CD4-positive, alpha-beta memory T cell (primary cell): ENCODE measurements at regions of chr18 and their contacts with region 1.

Region 1: GRCh38 chr18:35240664-35241447 is at the start of gene ZNF397:
- DNase-seq: peak; percentile 91 to 94 (median 92)
- H3K4me3 ChIP-seq: peak within 1 kb of the TSS; percentile 81 to 90
- H3K4me3 Mint-ChIP-seq: peak within 1 kb of the TSS; percentile 96 to 98 (median 96)
- H3K27ac ChIP-seq: peak within 1 kb of the TSS; percentile 95
- H3K27ac Mint-ChIP-seq: peak within 1 kb of the TSS; percentile 94 to 100 (median 99)
- H3K4me1 ChIP-seq: peaks cover 17% of the 10 kb centered on the region
- H3K4me1 Mint-ChIP-seq: peaks cover 10 to 40% (median 15%) of the 10 kb centered on the region in 4 donors
- H3K27me3 ChIP-seq: no peaks in the 10 kb centered on the region
- H3K27me3 Mint-ChIP-seq: no peaks in the 10 kb centered on the region
- total RNA-seq, gene ZNF397: 56.1 to 58.5 TPM

Region 2: DNA sequence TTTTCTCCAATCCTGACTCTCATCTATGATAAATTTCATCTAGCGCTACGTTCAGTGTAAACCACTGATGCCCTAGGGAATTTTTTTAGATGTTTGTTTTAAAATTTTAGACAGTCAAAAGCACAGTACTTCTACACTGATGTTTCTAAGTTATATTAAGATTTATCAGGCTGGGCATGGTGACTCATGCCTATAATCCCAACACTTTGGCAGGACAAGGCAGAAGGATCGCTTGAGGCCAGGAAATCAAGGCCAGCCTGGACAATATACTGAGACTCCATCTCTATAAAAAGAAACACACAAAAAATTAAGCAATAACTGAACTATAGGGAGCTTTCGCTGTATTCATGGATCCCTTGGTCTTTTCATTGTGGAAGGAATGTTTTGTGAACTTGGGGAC is 250.3 kb before region 1 on chr18:
- CTCF ChIA-PET with region 1: no interaction called
- POLR2A ChIA-PET with region 1: no interaction called
- intact Hi-C with region 1: no loop called
- DNase-seq: no peak
- H3K4me3 ChIP-seq: no peak overlapping the region
- H3K4me3 Mint-ChIP-seq: no peak overlapping the region
- H3K27ac ChIP-seq: no peak overlapping the region
- H3K27ac Mint-ChIP-seq: no peak overlapping the region
- H3K4me1 ChIP-seq: no peaks in the 10 kb centered on the region
- H3K4me1 Mint-ChIP-seq: no peaks in the 10 kb centered on the region
- H3K27me3 ChIP-seq: no peaks in the 10 kb centered on the region
- H3K27me3 Mint-ChIP-seq: peaks cover 1 to 4% of the 10 kb centered on the region in 2 donors

Region 3: GRCh38 chr18:35171315-35171987 is 69.4 kb before region 1 on chr18:
- CTCF ChIA-PET with region 1: no interaction called
- POLR2A ChIA-PET with region 1: no interaction called
- intact Hi-C with region 1: no loop called
- DNase-seq: no peak
- H3K4me3 ChIP-seq: no peak overlapping the region
- H3K4me3 Mint-ChIP-seq: no peak overlapping the region
- H3K27ac ChIP-seq: no peak overlapping the region
- H3K27ac Mint-ChIP-seq: no peak overlapping the region
- H3K4me1 ChIP-seq: peaks cover 7% of the 10 kb centered on the region
- H3K4me1 Mint-ChIP-seq: peaks cover 6 to 8% (median 6%) of the 10 kb centered on the region in 4 donors
- H3K27me3 ChIP-seq: no peaks in the 10 kb centered on the region
- H3K27me3 Mint-ChIP-seq: peaks cover 0 to 5% of the 10 kb centered on the region in 2 donors

Region 4: DNA sequence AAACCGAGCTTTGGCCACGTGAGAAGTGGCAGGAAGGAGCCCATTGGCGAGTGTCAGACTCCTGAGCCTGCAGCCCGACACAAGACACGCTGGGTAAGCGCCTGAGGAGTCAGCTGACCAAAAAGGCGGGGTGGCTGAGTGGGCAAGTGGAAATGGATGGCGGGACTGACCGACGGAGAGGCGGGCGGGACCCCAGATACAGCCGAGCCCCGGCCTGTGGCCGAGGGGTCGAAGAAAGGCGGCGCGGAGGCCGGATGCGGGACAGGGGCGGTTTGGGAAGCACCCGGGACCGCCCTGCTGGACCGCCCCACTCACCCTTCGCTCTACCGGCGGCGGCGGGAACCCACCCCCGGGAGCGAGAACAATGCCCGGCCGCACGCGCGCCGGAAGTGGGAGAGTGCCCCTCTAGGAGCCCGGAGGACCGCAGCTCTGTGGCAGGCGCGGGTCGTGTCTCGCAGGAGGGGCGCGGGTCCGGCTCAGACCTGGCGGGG is 26.4 kb after region 1 on chr18:
- CTCF ChIA-PET with region 1: interaction called, 3 read pairs
- POLR2A ChIA-PET with region 1: interaction called, 29 read pairs
- intact Hi-C with region 1: loop called (anchors 1 kb)
- DNase-seq: peak; percentile 49 to 69 (median 51)
- H3K4me3 ChIP-seq: peak overlapping the region; percentile 23 to 78
- H3K4me3 Mint-ChIP-seq: peak overlapping the region; percentile 93 to 99 (median 96)
- H3K27ac ChIP-seq: peak overlapping the region; percentile 62
- H3K27ac Mint-ChIP-seq: peak overlapping the region; percentile 83 to 98 (median 96)
- H3K4me1 ChIP-seq: peaks cover 10% of the 10 kb centered on the region
- H3K4me1 Mint-ChIP-seq: peaks cover 17 to 30% (median 25%) of the 10 kb centered on the region in 4 donors
- H3K27me3 ChIP-seq: no peaks in the 10 kb centered on the region
- H3K27me3 Mint-ChIP-seq: no peaks in the 10 kb centered on the region

Region 5: GRCh38 chr18:35355140-35355618 is 114.3 kb after region 1 on chr18:
- CTCF ChIA-PET with region 1: interaction called, 88 read pairs
- POLR2A ChIA-PET with region 1: no interaction called
- intact Hi-C with region 1: no loop called
- DNase-seq: peak; percentile 54 to 63 (median 60)
- H3K4me3 ChIP-seq: no peak overlapping the region
- H3K4me3 Mint-ChIP-seq: no peak overlapping the region
- H3K27ac ChIP-seq: no peak overlapping the region
- H3K27ac Mint-ChIP-seq: peak overlapping the region in 1 of 7 donors; percentile 19
- H3K4me1 ChIP-seq: no peaks in the 10 kb centered on the region
- H3K4me1 Mint-ChIP-seq: peaks cover 0 to 2% (median 0%) of the 10 kb centered on the region in 4 donors
- H3K27me3 ChIP-seq: no peaks in the 10 kb centered on the region
- H3K27me3 Mint-ChIP-seq: peaks cover 0 to 2% of the 10 kb centered on the region in 2 donors

Region 6: GRCh38 chr18:35580701-35581539 is 340.1 kb after region 1 on chr18:
- CTCF ChIA-PET with region 1: no interaction called
- POLR2A ChIA-PET with region 1: no interaction called
- intact Hi-C with region 1: loop called (anchors 2 kb)
- DNase-seq: peak; percentile 52 to 69 (median 64)
- H3K4me3 ChIP-seq: peak overlapping the region in 1 of 2 donors; percentile 49
- H3K4me3 Mint-ChIP-seq: peak overlapping the region; percentile 61 to 82 (median 76)
- H3K27ac ChIP-seq: peak overlapping the region; percentile 59
- H3K27ac Mint-ChIP-seq: no peak overlapping the region
- H3K4me1 ChIP-seq: peaks cover 18% of the 10 kb centered on the region
- H3K4me1 Mint-ChIP-seq: peaks cover 18 to 30% (median 20%) of the 10 kb centered on the region in 4 donors
- H3K27me3 ChIP-seq: no peaks in the 10 kb centered on the region
- H3K27me3 Mint-ChIP-seq: peaks cover 2 to 5% of the 10 kb centered on the region in 2 donors

Region 7: GRCh38 chr18:36067055-36067957 is 826.5 kb after region 1 on chr18 and contains the start of gene RPRD1A:
- CTCF ChIA-PET with region 1: no interaction called
- POLR2A ChIA-PET with region 1: no interaction called
- intact Hi-C with region 1: loop called (anchors 10 kb)
- DNase-seq: peak; percentile 94 to 97 (median 94)
- H3K4me3 ChIP-seq: peak within 1 kb of the TSS; percentile 81 to 87
- H3K4me3 Mint-ChIP-seq: peak within 1 kb of the TSS; percentile 92 to 98 (median 95)
- H3K27ac ChIP-seq: peak within 1 kb of the TSS; percentile 74
- H3K27ac Mint-ChIP-seq: peak within 1 kb of the TSS; percentile 89 to 98 (median 96)
- H3K4me1 ChIP-seq: peaks cover 32% of the 10 kb centered on the region
- H3K4me1 Mint-ChIP-seq: peaks cover 31 to 48% (median 40%) of the 10 kb centered on the region in 4 donors
- H3K27me3 ChIP-seq: no peaks in the 10 kb centered on the region
- H3K27me3 Mint-ChIP-seq: peaks cover 0 to 1% of the 10 kb centered on the region in 2 donors
- total RNA-seq, gene RPRD1A: 40.1 to 42.3 TPM